ENCODE measurements at regions of chr2 and their contacts with region 1.

Region 1: GRCh38 chr2:30115141-30115980 is 31.4 kb upstream of the YPEL5 start:
- DNase-seq: no peak
- H3K4me3 ChIP-seq: no peak overlapping the region
- CTCF ChIP-seq: peak; percentile 92

Region 2: GRCh38 chr2:29923110-29923721 is 192.1 kb before region 1 on chr2:
- CTCF ChIA-PET with region 1: interaction called, 15 read pairs
- POLR2A ChIA-PET with region 1: no interaction called
- DNase-seq: peak; percentile 5
- H3K4me3 ChIP-seq: no peak overlapping the region
- CTCF ChIP-seq: peak; percentile 74

Region 3: GRCh38 chr2:30095402-30095801 is 20.0 kb before region 1 on chr2:
- CTCF ChIA-PET with region 1: interaction called, 182 read pairs
- POLR2A ChIA-PET with region 1: interaction called, 3 read pairs
- DNase-seq: no peak
- H3K4me3 ChIP-seq: no peak overlapping the region
- CTCF ChIP-seq: no peak

Region 4: DNA sequence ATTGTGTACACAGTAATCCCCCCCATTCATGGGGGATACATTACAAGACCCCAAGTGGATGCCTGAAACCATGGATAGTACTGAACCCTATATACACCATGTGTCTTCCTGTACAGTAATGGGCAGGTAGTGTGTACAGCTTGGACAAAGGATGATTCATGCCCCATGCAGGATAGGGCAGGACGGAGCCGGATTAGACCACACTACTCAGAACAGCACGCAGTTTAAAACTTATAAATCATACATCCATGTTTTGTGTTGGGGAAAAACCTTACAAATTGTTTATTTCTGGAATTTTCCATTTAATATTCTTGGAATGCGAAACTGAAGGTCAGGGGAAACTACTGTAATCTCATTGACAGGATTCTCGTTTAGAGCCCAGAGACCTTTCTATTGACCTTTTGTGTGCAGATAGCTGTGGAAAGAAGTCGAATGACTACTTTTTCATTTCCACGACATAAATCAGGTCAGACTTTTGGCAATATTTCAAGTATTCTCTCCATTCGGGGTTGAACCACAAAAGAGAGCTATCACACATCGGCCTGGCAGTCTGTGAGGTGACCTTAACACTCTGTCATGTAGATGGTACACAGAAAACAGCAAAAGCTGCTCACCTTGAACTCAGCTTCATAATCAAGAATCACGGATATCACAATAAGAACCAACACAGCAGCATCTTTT is 21.5 kb after region 1 on chr2:
- CTCF ChIA-PET with region 1: interaction called, 18 read pairs
- POLR2A ChIA-PET with region 1: no interaction called
- DNase-seq: no peak
- H3K4me3 ChIP-seq: no peak overlapping the region
- CTCF ChIP-seq: no peak

Region 5: DNA sequence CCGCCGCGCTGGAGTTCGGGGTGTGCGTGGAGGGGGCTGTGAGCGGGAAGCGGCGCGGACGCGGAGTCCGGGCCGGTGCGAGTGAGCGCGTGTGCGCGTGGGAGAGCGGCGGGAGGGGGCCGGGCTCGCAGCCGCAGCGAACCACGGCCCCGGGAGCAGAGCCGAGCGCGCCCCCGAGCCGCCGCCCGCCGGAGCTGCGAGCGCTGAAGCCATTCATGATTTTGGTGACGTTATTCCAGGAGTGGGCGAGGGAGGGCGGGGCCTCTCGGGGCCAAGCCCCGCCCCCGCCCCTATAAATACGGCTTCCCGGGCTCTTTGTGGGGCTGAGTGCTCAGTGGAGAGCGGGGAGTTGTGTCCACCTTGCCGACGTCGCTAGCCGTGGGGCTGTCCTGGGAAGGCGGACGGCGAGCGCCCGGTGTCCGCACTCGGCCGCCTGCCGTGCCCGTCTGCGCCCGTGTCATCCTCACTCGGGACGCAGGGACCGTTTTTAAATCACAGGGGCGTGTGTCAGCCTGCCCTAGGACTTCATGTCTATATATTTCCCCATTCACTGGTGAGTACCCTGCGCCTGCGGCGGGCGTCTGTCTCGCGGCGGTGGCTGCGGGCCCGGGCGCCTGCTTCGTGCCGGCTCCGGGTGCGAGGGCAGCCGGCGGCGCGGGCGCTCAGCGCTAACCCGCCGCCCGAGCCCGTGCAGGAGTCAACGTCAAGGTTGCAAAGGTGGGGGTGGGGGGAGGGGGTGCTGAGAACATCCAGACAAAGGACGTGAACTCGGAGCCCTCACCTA is 116.0 kb after region 1 on chr2 and contains the start of gene LBH:
- CTCF ChIA-PET with region 1: no interaction called
- POLR2A ChIA-PET with region 1: interaction called, 14 read pairs
- DNase-seq: peak; percentile 41
- H3K4me3 ChIP-seq: peak within 1 kb of the TSS; percentile 80
- CTCF ChIP-seq: no peak

Region 6: GRCh38 chr2:30287857-30288513 is 172.6 kb after region 1 on chr2:
- CTCF ChIA-PET with region 1: no interaction called
- POLR2A ChIA-PET with region 1: no interaction called
- DNase-seq: no peak
- H3K4me3 ChIP-seq: no peak overlapping the region
- CTCF ChIP-seq: no peak

Region 7: GRCh38 chr2:30694286-30695055 is 579.1 kb after region 1 on chr2:
- CTCF ChIA-PET with region 1: no interaction called
- POLR2A ChIA-PET with region 1: no interaction called
- DNase-seq: no peak
- H3K4me3 ChIP-seq: no peak overlapping the region
- CTCF ChIP-seq: no peak

Region 8: DNA sequence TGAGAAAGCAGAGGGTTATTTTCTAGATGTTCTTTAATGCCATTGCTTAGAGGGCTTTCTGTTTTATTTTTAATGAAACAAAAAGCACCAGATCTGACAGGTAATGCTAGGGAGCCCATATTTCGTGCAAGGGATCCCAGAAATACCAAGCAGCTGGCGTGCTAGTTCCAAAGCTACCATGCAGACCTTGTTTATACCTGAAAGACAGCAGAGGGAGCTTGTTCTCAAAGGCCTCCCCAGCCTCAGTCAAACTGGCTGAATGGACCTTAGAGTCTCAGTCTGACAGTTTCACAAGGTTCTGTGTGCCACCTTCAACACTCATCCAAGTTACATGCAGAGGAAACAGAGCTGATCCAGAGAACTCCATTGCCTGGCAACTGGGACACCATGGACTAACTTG is 974.3 kb after region 1 on chr2:
- CTCF ChIA-PET with region 1: no interaction called
- POLR2A ChIA-PET with region 1: no interaction called
- DNase-seq: no peak
- H3K4me3 ChIP-seq: no peak overlapping the region
- CTCF ChIP-seq: no peak